OCI-LY7 (cell line): ENCODE measurements at regions of chr7 and their contacts with region 1.

Region 1: GRCh38 chr7:26864309-26865093 is at the start of gene SKAP2:
- DNase-seq: peak; percentile 94
- H3K4me3 ChIP-seq: peak within 1 kb of the TSS; percentile 95
- H3K27ac ChIP-seq: peak within 1 kb of the TSS; percentile 75
- H3K4me1 ChIP-seq: peaks cover 33% of the 10 kb centered on the region
- CTCF ChIP-seq: no peak
- total RNA-seq, gene SKAP2: 10.9 and 15.5 TPM in 2 replicates

Region 2: GRCh38 chr7:25862260-25863037 is 1002.1 kb before region 1 on chr7:
- CTCF ChIA-PET with region 1: no interaction called
- POLR2A ChIA-PET with region 1: no interaction called
- intact Hi-C with region 1: loop called (anchors 5 kb)
- DNase-seq: peak; percentile 100
- H3K4me3 ChIP-seq: peak overlapping the region; percentile 70
- H3K27ac ChIP-seq: peak overlapping the region; percentile 4
- H3K4me1 ChIP-seq: peaks cover 8% of the 10 kb centered on the region
- CTCF ChIP-seq: no peak

Region 3: DNA sequence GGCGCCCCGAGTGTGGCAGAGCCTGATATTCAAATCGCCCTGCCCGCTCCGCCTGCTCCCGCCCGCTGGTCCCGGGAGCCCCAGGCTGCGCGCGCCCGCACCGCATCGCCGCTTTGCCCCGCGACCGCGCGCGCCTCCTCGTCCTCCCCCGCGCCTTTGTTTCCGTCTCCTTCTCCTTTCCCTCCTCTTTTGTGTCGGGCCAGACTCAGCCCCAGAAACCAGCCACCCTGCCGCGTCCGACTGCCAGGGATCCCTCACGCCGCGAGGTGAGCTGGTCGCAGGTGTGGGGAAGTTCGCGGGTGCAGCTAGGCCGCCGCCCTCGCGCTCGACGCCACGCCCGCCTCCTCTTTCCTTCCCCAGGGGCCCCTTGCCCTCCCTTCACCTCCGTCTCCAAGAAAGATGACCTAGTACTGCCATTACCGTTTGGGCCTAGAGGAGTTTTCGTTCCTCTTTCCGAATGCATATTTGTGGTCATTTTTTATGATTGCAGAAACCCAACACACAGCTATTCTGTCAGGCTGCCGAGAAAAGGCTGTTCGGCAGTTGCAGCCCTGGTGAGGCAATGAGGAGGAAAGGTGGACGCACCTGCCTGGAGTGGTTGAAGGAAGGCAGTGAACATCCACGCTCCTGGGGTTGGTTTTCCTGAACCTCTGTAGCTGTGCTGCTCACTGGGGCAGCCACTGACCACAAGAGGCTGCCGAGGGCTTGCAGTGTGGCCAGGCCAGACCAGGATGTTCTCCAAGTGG is 465.6 kb before region 1 on chr7:
- CTCF ChIA-PET with region 1: no interaction called
- POLR2A ChIA-PET with region 1: no interaction called
- intact Hi-C with region 1: loop called (anchors 2 kb)
- DNase-seq: peak; percentile 94
- H3K4me3 ChIP-seq: peak overlapping the region; percentile 67
- H3K27ac ChIP-seq: peak overlapping the region; percentile 94
- H3K4me1 ChIP-seq: peaks cover 41% of the 10 kb centered on the region
- CTCF ChIP-seq: no peak

Region 4: GRCh38 chr7:26485367-26485934 is 379.1 kb before region 1 on chr7:
- CTCF ChIA-PET with region 1: no interaction called
- POLR2A ChIA-PET with region 1: no interaction called
- intact Hi-C with region 1: no loop called
- DNase-seq: no peak
- H3K4me3 ChIP-seq: no peak overlapping the region
- H3K27ac ChIP-seq: no peak overlapping the region
- H3K4me1 ChIP-seq: no peaks in the 10 kb centered on the region
- CTCF ChIP-seq: no peak

Region 5: DNA sequence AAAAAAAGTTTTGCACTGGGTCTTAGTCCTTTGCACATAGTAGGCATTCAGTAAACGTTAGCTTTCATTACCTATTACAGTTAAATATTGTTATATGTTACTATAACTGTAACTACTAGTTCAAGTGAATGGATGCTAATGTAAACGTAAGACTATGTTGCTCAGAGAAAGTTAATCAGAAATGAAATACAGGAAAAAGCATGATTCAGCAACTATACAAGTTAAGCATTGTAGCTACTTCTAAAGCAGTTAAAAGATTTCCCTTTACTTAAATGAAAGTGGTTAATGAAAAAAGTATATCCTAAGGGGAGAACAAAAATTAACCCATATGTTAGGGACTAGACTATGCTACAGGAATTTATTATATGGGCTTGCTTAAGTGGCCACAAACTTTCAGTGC is 121.3 kb before region 1 on chr7:
- CTCF ChIA-PET with region 1: no interaction called
- POLR2A ChIA-PET with region 1: no interaction called
- intact Hi-C with region 1: no loop called
- DNase-seq: no peak
- H3K4me3 ChIP-seq: no peak overlapping the region
- H3K27ac ChIP-seq: no peak overlapping the region
- H3K4me1 ChIP-seq: no peaks in the 10 kb centered on the region
- CTCF ChIP-seq: no peak

Region 6: DNA sequence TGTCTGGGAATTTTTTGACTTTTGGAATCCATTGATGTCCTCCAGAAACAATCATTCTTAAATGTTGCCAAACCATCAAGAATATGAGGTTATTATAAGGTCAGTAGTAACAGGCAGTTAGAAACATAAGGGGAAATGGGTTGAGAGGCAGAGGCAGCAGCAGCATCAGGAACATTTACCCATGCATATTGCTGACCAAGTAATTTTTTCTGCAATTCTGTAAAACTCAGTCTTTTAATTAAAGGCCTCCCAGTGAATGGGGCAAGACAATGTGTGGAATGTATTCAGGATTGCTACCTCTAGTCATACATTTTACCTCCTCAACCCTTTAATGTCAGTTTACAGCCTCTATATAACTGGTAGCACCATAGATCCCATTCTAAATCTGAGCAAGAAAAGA is 66.3 kb after region 1 on chr7:
- CTCF ChIA-PET with region 1: no interaction called
- POLR2A ChIA-PET with region 1: interaction called, 10 read pairs
- intact Hi-C with region 1: no loop called
- DNase-seq: no peak
- H3K4me3 ChIP-seq: no peak overlapping the region
- H3K27ac ChIP-seq: no peak overlapping the region
- H3K4me1 ChIP-seq: no peaks in the 10 kb centered on the region
- CTCF ChIP-seq: no peak

Region 7: GRCh38 chr7:26964156-26964808 is 99.8 kb after region 1 on chr7:
- CTCF ChIA-PET with region 1: no interaction called
- POLR2A ChIA-PET with region 1: interaction called, 5 read pairs
- intact Hi-C with region 1: loop called (anchors 2 kb)
- DNase-seq: peak; percentile 14
- H3K4me3 ChIP-seq: peak overlapping the region; percentile 28
- H3K27ac ChIP-seq: no peak overlapping the region
- H3K4me1 ChIP-seq: peaks cover 15% of the 10 kb centered on the region
- CTCF ChIP-seq: no peak

Region 8: DNA sequence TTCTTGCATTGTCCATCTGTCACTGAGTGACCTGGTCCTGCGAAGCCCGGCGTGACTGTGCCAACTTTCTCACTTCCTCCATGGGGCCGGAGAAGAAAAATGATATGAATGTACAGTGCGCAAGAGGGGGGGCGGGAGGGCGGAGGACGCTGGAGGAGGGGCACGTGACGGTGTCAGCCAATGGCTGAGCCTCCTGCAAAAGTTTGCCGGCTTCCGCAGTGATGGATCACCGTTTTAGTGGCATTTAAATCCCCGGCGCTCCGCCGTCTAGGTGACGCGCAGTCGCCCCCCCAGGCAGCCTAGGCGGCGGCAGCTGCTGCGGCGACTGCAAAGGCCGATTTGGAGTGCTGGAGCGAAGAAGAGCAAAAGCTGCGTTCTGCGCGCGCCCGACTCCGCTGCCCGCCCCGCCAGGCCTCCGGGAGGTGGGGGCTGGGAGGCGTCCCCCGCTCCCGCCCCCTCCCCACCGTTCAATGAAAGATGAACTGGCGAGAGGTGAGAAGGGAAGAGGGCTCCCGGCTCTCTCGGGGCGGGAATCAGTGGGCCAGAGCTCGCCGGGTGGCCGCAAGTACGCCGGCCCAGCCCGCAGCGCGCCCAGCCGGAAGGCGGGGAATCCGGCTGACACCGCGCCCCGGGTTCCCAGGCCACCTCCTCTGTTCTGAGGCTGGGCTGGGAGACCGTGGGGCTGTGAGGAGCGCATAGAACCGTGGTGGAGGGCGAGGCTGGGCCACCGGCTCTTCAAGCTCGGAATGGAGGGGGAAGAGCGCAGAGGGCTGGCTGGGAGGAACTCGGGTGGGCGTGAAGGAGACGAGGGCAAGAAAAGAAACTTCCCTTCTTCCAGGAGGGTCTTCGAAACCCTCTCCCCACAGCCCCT is 231.6 kb after region 1 on chr7 and contains the start of gene HOXA1:
- CTCF ChIA-PET with region 1: no interaction called
- POLR2A ChIA-PET with region 1: interaction called, 4 read pairs
- intact Hi-C with region 1: loop called (anchors 2 kb)
- DNase-seq: peak; percentile 94
- H3K4me3 ChIP-seq: peak within 1 kb of the TSS; percentile 80
- H3K27ac ChIP-seq: peak within 1 kb of the TSS; percentile 58
- H3K4me1 ChIP-seq: peaks cover 31% of the 10 kb centered on the region
- CTCF ChIP-seq: peak; percentile 33; the same call in 1 of the 2 replicates
- total RNA-seq, gene HOXA1: 1.6 and 3.0 TPM in 2 replicates

Region 9: GRCh38 chr7:27150568-27151340 is 286.3 kb after region 1 on chr7:
- CTCF ChIA-PET with region 1: interaction called, 3 read pairs
- POLR2A ChIA-PET with region 1: interaction called, 5 read pairs
- intact Hi-C with region 1: loop called (anchors 2 kb)
- DNase-seq: peak; percentile 86
- H3K4me3 ChIP-seq: peak overlapping the region; percentile 75
- H3K27ac ChIP-seq: no peak overlapping the region
- H3K4me1 ChIP-seq: peaks cover 48% of the 10 kb centered on the region
- CTCF ChIP-seq: peak; percentile 84